ENCODE measurements at regions of chr7 and their contacts with region 1.

Region 1: GRCh38 chr7:126535176-126535575 is 717.6 kb downstream of the GRM8 start:
- DNase-seq: no peak
- ATAC-seq: no peak

Region 2: GRCh38 chr7:125924037-125924436 is 611.1 kb before region 1 on chr7:
- intact Hi-C with region 1: loop called (anchors 5 kb)
- DNase-seq: no peak
- ATAC-seq: no peak

Measured in sciatic nerve (tissue), 2 donors.